ENCODE measurements at regions of chr9 and their contacts with region 1.

Region 1: GRCh38 chr9:129783516-129784361 is 19.2 kb upstream of the TOR1B start:
- DNase-seq: no peak
- H3K4me3 ChIP-seq: no peak overlapping the region
- H3K27ac ChIP-seq: no peak overlapping the region
- H3K4me1 ChIP-seq: no peaks in the 10 kb centered on the region
- H3K27me3 ChIP-seq: peaks cover 0 to 35% (median 0%) of the 10 kb centered on the region in 4 donors
- CTCF ChIP-seq: peak; percentile 80 to 97 (median 92)
- POLR2A ChIP-seq: no peak

Region 2: GRCh38 chr9:129648092-129648763 is 135.5 kb before region 1 on chr9:
- intact Hi-C with region 1: loop called (anchors 5 kb)
- DNase-seq: no peak
- H3K4me3 ChIP-seq: no peak overlapping the region
- H3K27ac ChIP-seq: no peak overlapping the region
- H3K4me1 ChIP-seq: peaks cover 0 to 51% (median 20%) of the 10 kb centered on the region in 3 donors
- H3K27me3 ChIP-seq: no peaks in the 10 kb centered on the region
- CTCF ChIP-seq: no peak
- POLR2A ChIP-seq: no peak

Region 3: GRCh38 chr9:129737479-129738274 is 46.1 kb before region 1 on chr9:
- intact Hi-C with region 1: loop called (anchors 2 kb)
- DNase-seq: peak; percentile 22
- H3K4me3 ChIP-seq: peak overlapping the region; percentile 33 to 80 (median 54)
- H3K27ac ChIP-seq: peak overlapping the region; percentile 74 to 87 (median 82)
- H3K4me1 ChIP-seq: peaks cover 3 to 17% (median 6%) of the 10 kb centered on the region in 3 donors
- H3K27me3 ChIP-seq: peaks cover 0 to 27% (median 0%) of the 10 kb centered on the region in 4 donors
- CTCF ChIP-seq: peak; percentile 96 to 99 (median 98)
- POLR2A ChIP-seq: no peak

Region 4: DNA sequence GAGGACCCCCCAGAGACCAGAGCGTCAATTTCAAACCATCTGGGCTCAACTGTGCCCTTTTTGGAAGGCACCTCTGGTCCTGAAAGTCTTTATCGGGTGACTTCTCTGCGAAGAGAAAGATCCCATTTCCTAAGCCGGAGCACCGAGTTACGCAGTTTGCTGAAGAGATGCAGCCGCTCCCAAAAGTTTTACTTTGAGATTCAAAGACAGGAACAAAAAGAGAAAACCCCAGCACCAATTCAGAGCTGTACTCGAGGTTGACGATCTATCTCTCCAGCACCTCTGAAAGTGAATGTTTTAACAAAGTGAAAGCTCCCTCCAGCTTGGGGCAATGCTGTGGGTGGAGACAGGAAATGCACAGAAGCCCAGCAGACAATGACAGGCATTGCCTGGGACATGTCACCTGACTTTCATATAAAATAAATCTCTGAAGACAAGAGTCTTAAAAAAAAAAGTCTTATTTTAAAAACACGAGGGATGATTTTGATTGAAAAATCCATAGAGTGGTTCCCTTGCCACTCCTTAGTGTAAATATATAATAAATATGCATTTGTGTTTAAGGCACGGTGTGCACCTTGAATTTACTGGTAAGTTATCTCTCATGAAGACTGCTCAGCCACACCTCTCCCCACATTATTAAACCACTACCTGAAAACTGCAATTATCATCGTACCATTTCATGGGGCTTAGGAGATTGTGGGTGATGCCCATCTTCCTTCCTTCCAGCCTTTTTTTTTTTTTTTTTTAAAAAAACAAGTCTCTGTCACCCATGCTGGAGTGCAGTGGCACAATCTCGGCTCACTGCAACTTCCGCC is 179.4 kb after region 1 on chr9:
- intact Hi-C with region 1: no loop called
- DNase-seq: peak; percentile 14
- H3K4me3 ChIP-seq: peak overlapping the region; percentile 30 to 65 (median 54)
- H3K27ac ChIP-seq: peak overlapping the region; percentile 77 to 93 (median 88)
- H3K4me1 ChIP-seq: peaks cover 5 to 61% (median 17%) of the 10 kb centered on the region in 3 donors
- H3K27me3 ChIP-seq: no peaks in the 10 kb centered on the region
- CTCF ChIP-seq: no peak
- POLR2A ChIP-seq: peak in 1 of 4 donors; percentile 65